Activated CD4-positive, alpha-beta T cell treated with anti-CD3 and anti-CD28 coated beads for 36 hours (primary cell): ENCODE measurements at regions of chr13 and their contacts with region 1.

Region 1: GRCh38 chr13:99269627-99270241 is 11.6 kb upstream of the GPR18 start:
- DNase-seq: peak; percentile 41
- ATAC-seq: peak; percentile 56
- H3K4me3 Mint-ChIP-seq: no peak overlapping the region
- H3K27ac Mint-ChIP-seq: no peak overlapping the region
- H3K4me1 Mint-ChIP-seq: peaks cover 70% of the 10 kb centered on the region
- H3K27me3 Mint-ChIP-seq: no peaks in the 10 kb centered on the region

Region 2: GRCh38 chr13:98910501-98910951 is 359.2 kb before region 1 on chr13:
- CTCF ChIA-PET with region 1: no interaction called
- POLR2A ChIA-PET with region 1: no interaction called
- intact Hi-C with region 1: loop called in 1 of 2 experiments (anchors 5 kb)
- DNase-seq: peak; percentile 56
- ATAC-seq: peak; percentile 89
- H3K4me3 Mint-ChIP-seq: peak overlapping the region; percentile 2
- H3K27ac Mint-ChIP-seq: peak overlapping the region; percentile 90
- H3K4me1 Mint-ChIP-seq: peaks cover 51% of the 10 kb centered on the region
- H3K27me3 Mint-ChIP-seq: no peaks in the 10 kb centered on the region

Region 3: GRCh38 chr13:98942997-98943396 is 326.7 kb before region 1 on chr13:
- CTCF ChIA-PET with region 1: no interaction called
- POLR2A ChIA-PET with region 1: no interaction called
- intact Hi-C with region 1: no loop called
- DNase-seq: no peak
- ATAC-seq: no peak
- H3K4me3 Mint-ChIP-seq: no peak overlapping the region
- H3K27ac Mint-ChIP-seq: no peak overlapping the region
- H3K4me1 Mint-ChIP-seq: peaks cover 11% of the 10 kb centered on the region
- H3K27me3 Mint-ChIP-seq: no peaks in the 10 kb centered on the region

Region 4: GRCh38 chr13:99176309-99177276 is 93.1 kb before region 1 on chr13:
- CTCF ChIA-PET with region 1: interaction called, 169 read pairs
- POLR2A ChIA-PET with region 1: interaction called, 8 read pairs
- intact Hi-C with region 1: loop called (anchors 1 kb)
- DNase-seq: peak; percentile 86
- ATAC-seq: peak; percentile 91
- H3K4me3 Mint-ChIP-seq: peak overlapping the region; percentile 51
- H3K27ac Mint-ChIP-seq: no peak overlapping the region
- H3K4me1 Mint-ChIP-seq: peaks cover 41% of the 10 kb centered on the region
- H3K27me3 Mint-ChIP-seq: no peaks in the 10 kb centered on the region

Region 5: DNA sequence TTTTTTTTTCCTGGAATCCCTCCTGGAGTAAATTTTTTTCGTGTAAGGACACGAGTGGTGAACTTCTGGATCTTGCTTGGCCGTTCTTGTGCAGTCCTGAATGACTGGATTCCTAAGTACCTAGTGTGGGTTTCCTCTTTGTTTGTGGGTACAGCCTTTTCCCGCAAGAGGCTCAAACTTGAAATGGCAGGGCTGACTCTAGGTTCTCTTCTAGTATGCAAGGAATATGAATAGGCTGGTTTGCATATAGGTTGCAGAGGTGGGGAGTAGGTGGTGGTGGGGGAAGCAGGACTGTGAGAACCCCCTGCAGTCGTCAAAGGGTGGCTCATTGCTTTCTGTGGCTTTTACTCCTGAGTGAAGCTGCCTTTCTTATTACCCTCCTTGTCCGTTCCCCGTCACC is 55.5 kb before region 1 on chr13:
- CTCF ChIA-PET with region 1: interaction called, 14 read pairs
- POLR2A ChIA-PET with region 1: interaction called, 4 read pairs
- intact Hi-C with region 1: loop called in 1 of 2 experiments (anchors 1 kb)
- DNase-seq: peak; percentile 82
- ATAC-seq: peak; percentile 80
- H3K4me3 Mint-ChIP-seq: peak overlapping the region; percentile 74
- H3K27ac Mint-ChIP-seq: peak overlapping the region; percentile 87
- H3K4me1 Mint-ChIP-seq: peaks cover 79% of the 10 kb centered on the region
- H3K27me3 Mint-ChIP-seq: no peaks in the 10 kb centered on the region

Region 6: GRCh38 chr13:99307648-99308339 is 38.1 kb after region 1 on chr13:
- CTCF ChIA-PET with region 1: interaction called, 99 read pairs
- POLR2A ChIA-PET with region 1: interaction called, 8 read pairs
- intact Hi-C with region 1: loop called (anchors 2 to 5 kb)
- DNase-seq: peak; percentile 88
- ATAC-seq: peak; percentile 82
- H3K4me3 Mint-ChIP-seq: peak overlapping the region; percentile 85
- H3K27ac Mint-ChIP-seq: peak overlapping the region; percentile 98
- H3K4me1 Mint-ChIP-seq: peaks cover 73% of the 10 kb centered on the region
- H3K27me3 Mint-ChIP-seq: no peaks in the 10 kb centered on the region

Region 7: GRCh38 chr13:99380921-99381645 is 111.3 kb after region 1 on chr13:
- CTCF ChIA-PET with region 1: interaction called, 53 read pairs
- POLR2A ChIA-PET with region 1: no interaction called
- intact Hi-C with region 1: no loop called
- DNase-seq: peak; percentile 89
- ATAC-seq: peak; percentile 78
- H3K4me3 Mint-ChIP-seq: no peak overlapping the region
- H3K27ac Mint-ChIP-seq: peak overlapping the region; percentile 96
- H3K4me1 Mint-ChIP-seq: peaks cover 89% of the 10 kb centered on the region
- H3K27me3 Mint-ChIP-seq: no peaks in the 10 kb centered on the region

Region 8: GRCh38 chr13:99436686-99437416 is 167.1 kb after region 1 on chr13:
- CTCF ChIA-PET with region 1: interaction called, 164 read pairs
- POLR2A ChIA-PET with region 1: interaction called, 6 read pairs
- intact Hi-C with region 1: loop called (anchors 1 kb)
- DNase-seq: peak; percentile 98
- ATAC-seq: peak; percentile 30
- H3K4me3 Mint-ChIP-seq: peak overlapping the region; percentile 0
- H3K27ac Mint-ChIP-seq: peak overlapping the region; percentile 45
- H3K4me1 Mint-ChIP-seq: peaks cover 60% of the 10 kb centered on the region
- H3K27me3 Mint-ChIP-seq: peaks cover 2% of the 10 kb centered on the region